GM10248 (cell line): ENCODE measurements at regions of chr5 and their contacts with region 1.

Region 1: DNA sequence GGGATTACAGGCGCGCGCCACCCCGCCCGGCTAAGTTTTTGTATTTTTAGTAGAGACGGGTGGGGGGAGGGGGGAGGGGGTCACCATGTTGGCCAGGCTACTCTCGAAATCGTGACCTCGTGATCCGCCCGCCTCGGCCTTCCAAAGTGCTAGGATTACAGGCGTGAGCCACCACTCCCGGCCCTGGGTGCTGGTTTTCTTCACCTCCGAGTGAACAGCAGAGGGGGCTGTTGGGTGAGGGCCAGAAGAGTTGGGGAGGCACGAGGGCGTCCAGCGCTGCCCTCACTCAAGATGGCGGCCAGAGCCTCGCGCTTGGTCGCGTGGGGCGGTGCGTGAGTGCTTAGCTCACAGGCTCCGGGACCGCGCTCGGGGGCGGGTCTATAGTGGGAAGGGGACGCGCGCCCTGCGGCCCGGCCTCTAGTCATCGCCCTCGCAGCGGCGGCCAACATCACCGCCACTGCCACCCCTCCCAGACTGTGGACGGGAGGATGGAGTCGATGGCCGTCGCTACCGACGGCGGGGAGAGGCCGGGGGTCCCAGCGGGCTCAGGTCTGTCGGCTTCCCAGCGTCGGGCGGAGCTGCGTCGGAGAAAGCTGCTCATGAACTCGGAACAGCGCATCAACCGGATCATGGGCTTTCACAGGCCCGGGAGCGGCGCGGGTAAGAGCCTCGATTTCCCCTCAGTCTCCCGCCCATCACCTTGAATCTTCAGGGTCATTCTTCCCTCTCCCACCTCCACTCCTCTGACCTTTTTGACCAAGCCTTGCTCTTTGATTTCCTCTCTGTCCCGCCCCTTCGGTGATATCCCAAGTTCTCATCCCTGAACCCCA is at the start of gene CAMLG:
- DNase-seq: peak; percentile 95
- CTCF ChIP-seq: peak; percentile 87

Region 2: GRCh38 chr5:134477462-134478250 is 260.7 kb before region 1 on chr5:
- CTCF ChIA-PET with region 1: no interaction called
- POLR2A ChIA-PET with region 1: no interaction called
- DNase-seq: no peak
- CTCF ChIP-seq: no peak

Region 3: DNA sequence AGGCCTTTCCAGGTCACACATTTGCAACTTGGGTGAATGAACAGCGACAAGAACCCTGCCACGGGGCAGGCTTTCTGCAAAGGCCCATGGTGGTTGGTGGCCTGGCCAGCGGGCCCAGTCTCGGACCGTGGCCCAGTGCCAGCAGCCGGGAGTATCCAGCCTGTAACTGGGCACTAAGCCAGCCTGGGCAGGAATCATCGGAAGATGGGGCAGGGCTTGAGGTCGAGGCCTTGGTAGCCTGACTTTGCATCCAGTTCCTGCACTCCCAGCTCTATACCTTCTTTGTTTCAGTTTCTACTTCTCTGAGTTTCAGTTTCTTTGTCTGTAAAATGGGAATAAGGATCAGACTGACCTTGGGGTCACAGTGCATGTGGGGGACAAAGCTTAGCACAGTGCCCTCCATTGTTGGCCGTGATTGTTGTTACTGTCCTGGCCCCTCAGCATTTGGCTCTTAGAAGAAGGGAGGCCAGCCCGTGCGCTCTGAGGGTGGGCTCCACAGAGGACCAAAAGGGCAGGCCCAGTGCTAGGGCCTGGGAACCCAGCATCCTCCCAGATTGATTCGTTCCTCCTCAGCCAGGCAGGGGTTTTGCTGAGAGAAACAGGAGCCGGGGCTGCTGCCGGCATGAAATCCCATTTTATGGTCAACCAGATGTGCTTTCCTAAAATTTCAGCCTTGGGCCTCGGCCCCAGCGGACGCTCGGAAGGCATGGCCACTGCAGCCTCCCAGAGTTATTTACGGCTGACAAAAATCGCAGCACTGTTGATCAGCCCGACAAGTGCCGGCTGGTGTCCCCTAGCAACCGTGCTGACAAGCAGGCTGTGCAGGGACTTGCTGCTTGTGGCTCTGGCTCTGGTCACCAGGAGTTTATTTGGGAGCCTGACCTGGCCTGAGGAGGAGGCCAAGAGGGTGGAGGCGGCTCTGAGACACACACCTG is 169.3 kb before region 1 on chr5:
- CTCF ChIA-PET with region 1: no interaction called
- POLR2A ChIA-PET with region 1: no interaction called
- DNase-seq: no peak
- CTCF ChIP-seq: no peak

Region 4: GRCh38 chr5:134758504-134759341 is 20.4 kb after region 1 on chr5 and contains the start of gene DDX46:
- CTCF ChIA-PET with region 1: interaction called, 66 read pairs
- POLR2A ChIA-PET with region 1: no interaction called
- DNase-seq: peak; percentile 97
- CTCF ChIP-seq: peak; percentile 95

Region 5: GRCh38 chr5:134917070-134917815 is 178.9 kb after region 1 on chr5:
- CTCF ChIA-PET with region 1: interaction called, 11 read pairs
- POLR2A ChIA-PET with region 1: no interaction called
- DNase-seq: no peak
- CTCF ChIP-seq: peak; percentile 37